ENCODE measurements at regions of chr16 and their contacts with region 1.

Region 1: GRCh38 chr16:9134739-9135138 is 43.3 kb downstream of the HAPSTR1 start:
- DNase-seq: no peak
- H3K4me3 ChIP-seq: no peak overlapping the region
- H3K27me3 ChIP-seq: no peaks in the 10 kb centered on the region; the same call in 1 of the 2 replicates
- CTCF ChIP-seq: peak; percentile 63

Region 2: DNA sequence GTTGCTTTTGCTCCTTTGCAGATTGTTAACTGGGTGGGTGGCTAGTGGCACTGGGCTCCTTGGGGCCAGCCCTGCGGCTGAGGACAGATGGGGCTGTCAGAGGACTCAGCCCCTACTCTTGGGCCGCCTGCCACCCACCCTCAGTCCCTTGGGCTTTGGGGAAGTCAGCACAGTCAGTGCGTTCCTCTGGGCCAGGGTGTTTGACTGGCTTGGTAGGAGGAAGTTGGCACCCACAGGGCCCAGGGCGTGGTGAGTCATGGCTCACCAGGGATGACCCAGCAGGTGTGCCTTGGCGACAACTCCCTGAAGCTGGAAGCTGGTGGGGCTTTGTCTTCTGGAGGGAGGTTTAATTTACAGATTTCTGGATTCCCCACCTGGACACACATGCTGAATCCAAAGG is 10.9 kb before region 1 on chr16:
- CTCF ChIA-PET with region 1: interaction called, 16 read pairs
- POLR2A ChIA-PET with region 1: no interaction called
- DNase-seq: no peak
- H3K4me3 ChIP-seq: no peak overlapping the region
- H3K27me3 ChIP-seq: no peaks in the 10 kb centered on the region
- CTCF ChIP-seq: no peak

Region 3: DNA sequence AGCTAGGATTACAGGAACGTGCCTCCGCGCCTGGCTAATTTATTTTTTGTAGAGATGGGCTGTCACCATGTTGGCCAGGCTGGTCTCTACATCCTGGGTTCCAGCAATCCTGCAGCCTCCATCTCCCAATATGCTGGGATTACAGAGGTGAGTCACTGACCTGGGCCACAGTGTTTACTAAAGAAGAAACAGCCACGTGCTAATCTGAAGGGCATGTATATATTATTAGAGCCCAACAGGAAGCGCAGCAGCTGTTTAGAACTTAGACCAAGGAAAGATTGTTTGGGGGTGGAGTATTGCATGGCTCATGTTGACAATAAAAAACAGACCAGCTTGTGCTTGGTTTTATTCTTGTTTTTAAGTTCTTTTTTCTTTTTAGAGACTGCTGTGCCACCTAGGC is 16.9 kb after region 1 on chr16:
- CTCF ChIA-PET with region 1: interaction called, 33 read pairs
- POLR2A ChIA-PET with region 1: no interaction called
- DNase-seq: no peak
- H3K4me3 ChIP-seq: no peak overlapping the region
- H3K27me3 ChIP-seq: no peaks in the 10 kb centered on the region
- CTCF ChIP-seq: no peak

Region 4: GRCh38 chr16:9176547-9177418 is 42.0 kb after region 1 on chr16:
- CTCF ChIA-PET with region 1: no interaction called
- POLR2A ChIA-PET with region 1: no interaction called
- DNase-seq: no peak
- H3K4me3 ChIP-seq: no peak overlapping the region
- H3K27me3 ChIP-seq: no peaks in the 10 kb centered on the region
- CTCF ChIP-seq: no peak